Activated T-helper 2 cell treated with anti-CD3 and anti-CD28 coated beads, Interferon-gamma antibody, Interleukin-2, Interleukin-4, amounts not matched to agents 10 μg/mL and 5 μg/mL and 100 μg/mL, durations not matched to agents 14 hours and 24 hours and 36 hours (primary cell): ENCODE measurements at regions of chr14 and their contacts with region 1.

Region 1: DNA sequence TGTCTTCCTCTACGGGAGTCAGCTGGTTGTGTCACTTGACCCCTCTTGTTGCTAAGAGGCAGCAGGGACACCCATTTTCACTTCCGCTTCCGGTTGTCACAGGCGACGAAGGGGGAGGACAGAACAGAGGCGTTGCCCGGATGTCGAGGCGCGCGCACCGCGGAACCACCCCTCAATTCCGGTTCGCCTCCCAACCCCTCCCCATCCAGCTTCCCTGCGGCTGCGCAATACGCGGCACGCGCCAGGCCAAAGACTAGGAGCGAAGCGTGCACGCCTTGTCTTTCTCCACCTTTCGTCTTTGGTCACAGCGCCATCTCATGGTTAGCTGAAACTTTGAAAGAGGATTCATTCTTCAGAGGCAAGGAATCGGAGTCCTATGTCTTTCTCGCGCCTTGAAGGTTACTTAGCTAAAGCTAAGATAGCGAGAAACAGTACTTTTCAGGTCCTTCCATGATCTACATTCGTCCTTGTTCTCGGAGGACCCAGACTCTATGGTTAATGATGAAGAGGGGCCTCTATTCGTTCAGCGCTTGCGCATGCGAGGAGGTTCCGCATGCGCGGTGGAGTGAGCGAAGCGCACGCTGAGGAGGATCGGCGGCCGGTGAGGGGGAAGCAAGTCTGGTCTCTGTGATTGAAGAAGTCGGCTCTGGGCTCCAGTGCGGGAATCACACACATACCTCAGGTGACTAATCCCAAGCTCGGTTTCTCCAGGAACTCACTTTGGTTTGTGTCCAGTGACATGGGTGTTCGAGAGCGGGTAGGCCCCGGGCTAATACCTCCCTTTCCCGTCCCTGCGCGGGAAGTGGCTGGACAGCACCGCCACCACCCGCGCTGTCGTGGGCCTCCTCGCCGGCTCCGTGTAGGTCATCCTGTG is at the starts of genes ATP6V1D and EIF2S1:
- DNase-seq: peak; percentile 100
- H3K4me3 Mint-ChIP-seq: peak within 1 kb of the TSS; percentile 97
- H3K27ac Mint-ChIP-seq: peak within 1 kb of the TSS; percentile 98
- H3K4me1 Mint-ChIP-seq: peaks cover 51% of the 10 kb centered on the region
- H3K27me3 Mint-ChIP-seq: no peaks in the 10 kb centered on the region
- total RNA-seq, gene ATP6V1D: 23.6 and 26.8 TPM in 2 replicates
- total RNA-seq, gene EIF2S1: 217 and 230 TPM in 2 replicates

Region 2: GRCh38 chr14:67166450-67166853 is 193.6 kb before region 1 on chr14:
- intact Hi-C with region 1: loop called (anchors 5 kb)
- DNase-seq: no peak
- H3K4me3 Mint-ChIP-seq: no peak overlapping the region
- H3K27ac Mint-ChIP-seq: no peak overlapping the region
- H3K4me1 Mint-ChIP-seq: peaks cover 19% of the 10 kb centered on the region
- H3K27me3 Mint-ChIP-seq: no peaks in the 10 kb centered on the region

Region 3: GRCh38 chr14:67373347-67373746 is 13.3 kb after region 1 on chr14:
- intact Hi-C with region 1: loop called (anchors 1 kb)
- DNase-seq: no peak
- H3K4me3 Mint-ChIP-seq: no peak overlapping the region
- H3K27ac Mint-ChIP-seq: peak overlapping the region; percentile 67
- H3K4me1 Mint-ChIP-seq: peaks cover 25% of the 10 kb centered on the region
- H3K27me3 Mint-ChIP-seq: no peaks in the 10 kb centered on the region

Region 4: DNA sequence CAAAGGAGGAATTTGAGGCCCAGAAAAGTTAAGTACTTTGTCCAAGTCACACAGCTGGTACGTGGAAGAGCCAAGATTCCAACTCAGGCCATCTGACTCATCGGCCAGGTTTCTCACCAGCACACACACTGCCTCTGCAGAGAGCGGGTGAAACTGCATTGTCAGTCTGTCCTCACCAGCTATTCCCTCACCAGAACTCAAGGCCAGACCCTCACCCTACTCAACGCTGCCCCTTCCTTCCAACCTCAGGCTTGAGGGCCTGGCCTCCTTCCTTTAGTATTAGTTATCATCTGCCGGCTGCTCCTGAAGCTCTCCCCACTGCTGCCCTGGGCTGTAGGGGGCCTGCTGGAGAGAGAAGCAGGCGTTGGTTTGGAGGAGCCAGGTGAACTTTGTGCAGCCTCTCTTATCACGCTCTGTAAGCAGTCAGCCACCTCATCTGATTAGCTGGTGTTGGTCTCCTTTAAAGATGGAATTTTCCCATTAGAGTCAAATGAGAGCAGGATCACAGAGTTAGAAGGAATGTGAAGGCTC is 68.6 kb after region 1 on chr14:
- intact Hi-C with region 1: no loop called
- DNase-seq: no peak
- H3K4me3 Mint-ChIP-seq: no peak overlapping the region
- H3K27ac Mint-ChIP-seq: no peak overlapping the region
- H3K4me1 Mint-ChIP-seq: peaks cover 4% of the 10 kb centered on the region
- H3K27me3 Mint-ChIP-seq: peaks cover 44% of the 10 kb centered on the region

Region 5: GRCh38 chr14:67491741-67492505 is 131.9 kb after region 1 on chr14:
- intact Hi-C with region 1: no loop called
- DNase-seq: no peak
- H3K4me3 Mint-ChIP-seq: no peak overlapping the region
- H3K27ac Mint-ChIP-seq: no peak overlapping the region
- H3K4me1 Mint-ChIP-seq: peaks cover 27% of the 10 kb centered on the region
- H3K27me3 Mint-ChIP-seq: peaks cover 21% of the 10 kb centered on the region

Region 6: DNA sequence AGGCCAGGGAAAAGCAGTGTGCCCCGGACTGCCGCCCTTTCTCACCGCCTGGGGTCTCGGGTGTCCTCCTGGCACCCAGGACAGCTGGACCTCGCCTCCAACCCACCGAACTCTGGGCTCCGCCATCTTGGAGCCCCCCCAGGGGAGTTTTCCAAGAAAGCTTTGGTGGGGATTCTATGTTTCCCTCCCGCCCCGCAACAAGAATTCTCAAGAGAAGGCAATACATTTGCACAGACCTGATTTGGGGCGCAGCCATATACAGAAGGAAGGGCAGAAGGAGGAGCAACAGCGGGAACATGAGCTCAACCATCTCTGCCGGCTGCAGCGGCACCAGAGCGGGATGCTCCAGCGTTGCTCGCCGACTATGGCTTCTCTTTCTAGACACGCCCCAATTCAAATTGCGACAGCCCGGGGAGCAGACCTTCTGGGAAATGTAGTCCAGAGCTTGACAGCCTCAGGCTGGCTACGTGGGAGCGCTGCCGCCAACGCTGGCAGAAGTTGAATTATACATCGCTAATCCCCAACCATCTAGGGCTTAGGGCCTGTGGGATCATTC is 335.5 kb after region 1 on chr14 and contains the start of gene RDH11:
- intact Hi-C with region 1: loop called (anchors 1 kb)
- DNase-seq: peak; percentile 81
- H3K4me3 Mint-ChIP-seq: peak within 1 kb of the TSS; percentile 95
- H3K27ac Mint-ChIP-seq: peak within 1 kb of the TSS; percentile 97
- H3K4me1 Mint-ChIP-seq: peaks cover 35% of the 10 kb centered on the region
- H3K27me3 Mint-ChIP-seq: no peaks in the 10 kb centered on the region
- total RNA-seq, gene RDH11: 78.4 and 82.9 TPM in 2 replicates